ENCODE measurements at regions of chr20 and their contacts with region 1.

Region 1: GRCh38 chr20:58890518-58891085 is 38.1 kb downstream of the GNAS start:
- DNase-seq: peak; percentile 55
- H3K4me3 Mint-ChIP-seq: peak overlapping the region; percentile 85
- H3K27ac Mint-ChIP-seq: peak overlapping the region; percentile 94
- H3K4me1 Mint-ChIP-seq: peaks cover 31% of the 10 kb centered on the region
- H3K27me3 Mint-ChIP-seq: no peaks in the 10 kb centered on the region

Region 2: GRCh38 chr20:57391074-57391554 is 1499.5 kb before region 1 on chr20 and contains the start of gene RBM38:
- intact Hi-C with region 1: loop called (anchors 5 kb)
- DNase-seq: peak; percentile 74
- H3K4me3 Mint-ChIP-seq: peak within 1 kb of the TSS; percentile 91
- H3K27ac Mint-ChIP-seq: peak within 1 kb of the TSS; percentile 98
- H3K4me1 Mint-ChIP-seq: peaks cover 30% of the 10 kb centered on the region
- H3K27me3 Mint-ChIP-seq: no peaks in the 10 kb centered on the region
- total RNA-seq, gene RBM38: 88.9 and 89.5 TPM in 2 replicates

Region 3: GRCh38 chr20:58760856-58761255 is 129.7 kb before region 1 on chr20:
- intact Hi-C with region 1: no loop called
- DNase-seq: no peak
- H3K4me3 Mint-ChIP-seq: no peak overlapping the region
- H3K27ac Mint-ChIP-seq: no peak overlapping the region
- H3K4me1 Mint-ChIP-seq: no peaks in the 10 kb centered on the region
- H3K27me3 Mint-ChIP-seq: peaks cover 26% of the 10 kb centered on the region

Region 4: GRCh38 chr20:58829531-58829941 is 61.1 kb before region 1 on chr20:
- intact Hi-C with region 1: no loop called
- DNase-seq: no peak
- H3K4me3 Mint-ChIP-seq: no peak overlapping the region
- H3K27ac Mint-ChIP-seq: no peak overlapping the region
- H3K4me1 Mint-ChIP-seq: peaks cover 12% of the 10 kb centered on the region
- H3K27me3 Mint-ChIP-seq: peaks cover 20% of the 10 kb centered on the region

Region 5: GRCh38 chr20:58980700-58981627 is 90.4 kb after region 1 on chr20 and contains the start of gene NELFCD:
- intact Hi-C with region 1: loop called (anchors 5 kb)
- DNase-seq: peak; percentile 83
- H3K4me3 Mint-ChIP-seq: peak within 1 kb of the TSS; percentile 93
- H3K27ac Mint-ChIP-seq: peak within 1 kb of the TSS; percentile 90
- H3K4me1 Mint-ChIP-seq: peaks cover 27% of the 10 kb centered on the region
- H3K27me3 Mint-ChIP-seq: peaks cover 3% of the 10 kb centered on the region
- total RNA-seq, gene NELFCD: 111 and 113 TPM in 2 replicates

Region 6: GRCh38 chr20:59032023-59032712 is 141.6 kb after region 1 on chr20 and contains the start of gene ATP5F1E:
- intact Hi-C with region 1: loop called (anchors 2 kb)
- DNase-seq: peak; percentile 94
- H3K4me3 Mint-ChIP-seq: peak within 1 kb of the TSS; percentile 93
- H3K27ac Mint-ChIP-seq: peak within 1 kb of the TSS; percentile 89
- H3K4me1 Mint-ChIP-seq: peaks cover 65% of the 10 kb centered on the region
- H3K27me3 Mint-ChIP-seq: no peaks in the 10 kb centered on the region
- total RNA-seq, gene ATP5F1E: 61.2 and 66.9 TPM in 2 replicates

Region 7: GRCh38 chr20:59120491-59120890 is 229.9 kb after region 1 on chr20:
- intact Hi-C with region 1: no loop called
- DNase-seq: no peak
- H3K4me3 Mint-ChIP-seq: no peak overlapping the region
- H3K27ac Mint-ChIP-seq: peak overlapping the region; percentile 2
- H3K4me1 Mint-ChIP-seq: peaks cover 50% of the 10 kb centered on the region
- H3K27me3 Mint-ChIP-seq: peaks cover 4% of the 10 kb centered on the region

Region 8: DNA sequence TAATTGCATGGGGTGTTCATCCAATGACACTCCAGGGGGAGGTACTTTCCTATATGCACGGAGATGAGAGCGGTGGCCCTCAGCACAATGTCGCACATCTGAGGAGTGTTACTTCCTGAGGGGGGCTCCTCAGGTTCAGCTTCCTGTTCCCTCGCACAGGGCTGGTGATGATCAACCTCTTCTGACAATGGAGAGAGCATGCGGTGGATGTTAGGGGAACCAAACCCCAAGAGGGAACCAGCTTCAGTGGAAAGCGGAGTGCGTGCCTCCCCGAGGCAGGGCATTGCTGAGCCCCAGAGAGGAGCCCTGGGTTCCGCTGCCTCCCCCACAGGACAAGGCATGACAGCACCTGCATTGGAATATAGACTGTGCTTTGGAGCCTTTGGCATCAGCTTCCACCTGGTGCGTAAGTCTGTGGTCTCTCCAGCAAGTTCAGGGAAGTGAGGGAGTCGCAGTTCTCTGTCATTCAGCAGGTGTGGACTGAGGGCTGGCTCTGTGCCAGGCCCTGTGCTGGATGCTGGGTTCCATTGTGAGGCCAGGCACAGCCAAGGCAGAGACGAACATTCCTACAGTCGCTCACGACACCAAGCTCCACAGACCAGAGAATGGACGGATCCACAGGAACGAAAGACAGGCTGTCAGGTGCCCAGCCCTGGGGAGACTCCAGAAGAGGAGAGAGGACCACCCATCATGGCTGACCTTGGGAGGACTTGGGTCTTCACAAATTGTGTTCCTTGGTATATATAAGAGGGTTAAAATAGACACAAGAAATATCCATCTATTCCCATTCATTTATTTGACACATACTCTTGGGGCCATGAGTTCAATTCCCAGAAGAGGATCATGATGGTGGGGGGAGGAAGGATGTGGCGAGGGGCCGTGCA is 269.1 kb after region 1 on chr20:
- intact Hi-C with region 1: loop called (anchors 10 kb)
- DNase-seq: no peak
- H3K4me3 Mint-ChIP-seq: peak overlapping the region; percentile 41
- H3K27ac Mint-ChIP-seq: peak overlapping the region; percentile 62
- H3K4me1 Mint-ChIP-seq: peaks cover 71% of the 10 kb centered on the region
- H3K27me3 Mint-ChIP-seq: no peaks in the 10 kb centered on the region

Region 9: GRCh38 chr20:60024801-60025200 is 1134.2 kb after region 1 on chr20:
- intact Hi-C with region 1: no loop called
- DNase-seq: no peak
- H3K4me3 Mint-ChIP-seq: no peak overlapping the region
- H3K27ac Mint-ChIP-seq: no peak overlapping the region
- H3K4me1 Mint-ChIP-seq: peaks cover 2% of the 10 kb centered on the region
- H3K27me3 Mint-ChIP-seq: no peaks in the 10 kb centered on the region

Measured in activated T-helper 2 cell treated with anti-CD3 and anti-CD28 coated beads, Interferon-gamma antibody, Interleukin-2, Interleukin-4, amounts not matched to agents 10 μg/mL and 5 μg/mL and 100 μg/mL, durations not matched to agents 14 hours and 24 hours and 36 hours (primary cell).